ENCODE measurements at regions of chr19 and their contacts with region 1.

Region 1: DNA sequence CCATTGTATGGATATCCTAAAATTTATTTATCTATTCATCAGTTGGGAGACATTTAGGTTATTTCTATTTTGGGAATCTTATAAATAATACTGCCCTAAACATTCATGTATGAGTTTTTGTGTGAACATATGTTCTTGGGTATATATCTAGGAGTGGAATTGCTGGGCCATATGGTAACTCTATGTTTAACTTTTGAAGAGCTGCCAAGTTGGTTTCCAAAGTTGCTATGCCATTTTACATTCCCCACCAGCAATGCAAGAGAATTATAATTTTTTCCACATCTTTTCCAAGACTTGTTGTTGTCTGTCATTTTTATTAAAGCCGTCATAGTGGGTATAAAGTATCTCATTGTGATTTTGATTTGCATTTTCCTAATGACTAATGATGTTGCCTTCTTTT is 48.2 kb upstream of the CALM3 start:
- DNase-seq: no peak
- ATAC-seq: no peak
- H3K4me3 Mint-ChIP-seq: no peak overlapping the region
- H3K27ac Mint-ChIP-seq: no peak overlapping the region
- H3K4me1 Mint-ChIP-seq: no peaks in the 10 kb centered on the region
- H3K27me3 Mint-ChIP-seq: peaks cover 4% of the 10 kb centered on the region
- CTCF ChIP-seq: no peak

Region 2: DNA sequence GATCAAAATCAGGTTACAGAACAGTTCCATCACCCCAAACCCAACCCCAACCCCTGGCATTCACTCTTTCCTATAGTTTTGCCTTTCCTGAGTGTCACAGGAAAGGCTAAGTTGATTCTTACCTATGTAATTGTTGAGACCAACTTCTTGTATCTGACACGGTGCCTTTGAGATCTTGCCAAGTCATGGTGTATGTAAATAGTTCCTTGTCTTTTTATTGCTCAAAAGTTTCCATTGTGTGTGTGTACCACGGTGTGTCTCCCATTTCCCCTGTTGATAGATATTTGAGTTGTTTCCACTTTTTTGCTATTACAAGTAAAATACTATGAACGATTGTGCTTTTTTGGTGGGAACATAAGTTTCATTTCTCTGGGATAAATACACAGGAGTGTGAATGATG is 408.1 kb before region 1 on chr19:
- CTCF ChIA-PET with region 1: no interaction called
- POLR2A ChIA-PET with region 1: no interaction called
- intact Hi-C with region 1: no loop called
- DNase-seq: no peak
- ATAC-seq: no peak
- H3K4me3 Mint-ChIP-seq: no peak overlapping the region
- H3K27ac Mint-ChIP-seq: no peak overlapping the region
- H3K4me1 Mint-ChIP-seq: peaks cover 8% of the 10 kb centered on the region
- H3K27me3 Mint-ChIP-seq: peaks cover 38% of the 10 kb centered on the region
- CTCF ChIP-seq: no peak

Region 3: DNA sequence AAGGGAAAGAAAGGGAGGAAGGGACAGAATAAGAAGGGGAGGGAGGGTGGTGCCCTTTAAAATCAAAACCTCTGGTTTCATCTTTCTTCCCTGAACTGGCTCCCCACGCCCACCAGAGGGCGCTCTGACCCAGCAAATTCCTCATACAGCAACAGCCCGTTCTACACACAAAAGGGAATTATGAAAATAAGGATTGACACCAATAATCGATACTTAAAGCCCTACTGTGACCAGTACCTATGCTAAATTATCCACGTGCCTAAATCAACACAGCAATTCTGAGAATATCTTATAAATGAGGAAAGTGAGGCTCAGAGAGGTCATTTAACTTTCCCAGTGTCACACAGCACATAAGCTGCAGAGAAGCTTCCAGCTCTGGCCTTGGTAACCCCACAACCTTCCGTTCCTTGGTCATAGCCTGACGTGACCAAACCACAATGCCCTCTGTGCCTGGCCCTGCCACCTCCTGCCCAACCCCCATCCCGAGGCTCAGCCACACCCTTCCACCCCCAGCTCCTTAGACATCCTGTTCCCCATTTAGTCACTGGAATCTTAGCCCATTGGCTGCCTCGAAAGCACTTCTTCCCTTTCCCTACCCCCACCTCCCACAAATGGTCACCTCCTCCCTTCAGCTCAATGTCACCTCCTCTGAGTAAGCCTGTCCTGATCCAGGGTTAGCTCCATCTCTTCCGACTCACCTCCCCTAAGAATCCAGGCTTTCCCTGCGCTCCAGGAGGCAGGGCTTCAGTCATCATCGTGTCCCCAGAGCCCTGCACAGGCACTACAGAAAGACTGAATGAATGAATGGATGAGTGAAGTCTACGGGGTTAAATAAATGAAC is 23.0 kb before region 1 on chr19:
- CTCF ChIA-PET with region 1: interaction called, 14 read pairs
- POLR2A ChIA-PET with region 1: no interaction called
- intact Hi-C with region 1: no loop called
- DNase-seq: peak; percentile 79
- ATAC-seq: peak; percentile 68
- H3K4me3 Mint-ChIP-seq: no peak overlapping the region
- H3K27ac Mint-ChIP-seq: peak overlapping the region; percentile 51
- H3K4me1 Mint-ChIP-seq: peaks cover 12% of the 10 kb centered on the region
- H3K27me3 Mint-ChIP-seq: no peaks in the 10 kb centered on the region
- CTCF ChIP-seq: peak; percentile 99

Region 4: DNA sequence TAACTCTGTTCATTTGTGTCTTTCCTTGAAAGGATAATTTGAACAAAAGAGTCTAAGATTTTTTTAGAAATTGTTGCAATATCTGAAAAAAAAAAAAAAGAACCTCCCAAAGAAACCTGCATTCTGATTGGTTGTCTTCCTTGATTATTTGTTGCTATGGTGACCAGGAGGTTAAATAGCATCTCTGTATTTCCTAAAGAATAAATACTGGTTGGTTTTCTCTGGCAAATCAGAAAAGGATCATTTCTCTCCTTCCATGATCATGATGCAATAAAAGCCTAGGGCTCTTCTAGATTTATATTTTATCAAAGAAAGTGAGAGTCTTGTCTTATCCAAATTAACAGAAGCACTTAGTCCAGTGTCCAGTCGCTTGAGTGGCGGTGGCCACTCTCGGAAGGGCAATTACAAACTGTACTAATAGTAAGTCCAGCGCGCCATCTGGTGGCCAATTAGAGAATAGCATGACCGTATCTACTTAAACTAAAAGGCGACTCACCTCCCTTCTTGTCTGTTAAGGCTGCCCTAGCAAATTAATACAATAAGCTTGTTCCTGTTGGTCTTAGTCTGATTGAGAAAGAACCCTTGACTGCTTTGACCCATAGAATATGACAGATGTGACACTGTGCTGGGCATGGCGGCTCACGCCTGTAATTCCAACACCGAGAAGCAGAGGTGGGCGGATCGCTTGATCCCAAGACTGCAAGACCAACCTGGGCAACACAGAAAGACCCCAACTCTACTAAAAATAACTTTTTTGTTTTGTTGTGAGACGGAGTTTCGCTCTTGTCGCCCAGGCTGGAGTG is 10.3 kb before region 1 on chr19:
- CTCF ChIA-PET with region 1: interaction called, 43 read pairs
- POLR2A ChIA-PET with region 1: no interaction called
- intact Hi-C with region 1: no loop called
- DNase-seq: peak; percentile 96
- ATAC-seq: peak; percentile 72
- H3K4me3 Mint-ChIP-seq: no peak overlapping the region
- H3K27ac Mint-ChIP-seq: no peak overlapping the region
- H3K4me1 Mint-ChIP-seq: peaks cover 2% of the 10 kb centered on the region
- H3K27me3 Mint-ChIP-seq: peaks cover under 1% of the 10 kb centered on the region
- CTCF ChIP-seq: peak; percentile 91

Region 5: DNA sequence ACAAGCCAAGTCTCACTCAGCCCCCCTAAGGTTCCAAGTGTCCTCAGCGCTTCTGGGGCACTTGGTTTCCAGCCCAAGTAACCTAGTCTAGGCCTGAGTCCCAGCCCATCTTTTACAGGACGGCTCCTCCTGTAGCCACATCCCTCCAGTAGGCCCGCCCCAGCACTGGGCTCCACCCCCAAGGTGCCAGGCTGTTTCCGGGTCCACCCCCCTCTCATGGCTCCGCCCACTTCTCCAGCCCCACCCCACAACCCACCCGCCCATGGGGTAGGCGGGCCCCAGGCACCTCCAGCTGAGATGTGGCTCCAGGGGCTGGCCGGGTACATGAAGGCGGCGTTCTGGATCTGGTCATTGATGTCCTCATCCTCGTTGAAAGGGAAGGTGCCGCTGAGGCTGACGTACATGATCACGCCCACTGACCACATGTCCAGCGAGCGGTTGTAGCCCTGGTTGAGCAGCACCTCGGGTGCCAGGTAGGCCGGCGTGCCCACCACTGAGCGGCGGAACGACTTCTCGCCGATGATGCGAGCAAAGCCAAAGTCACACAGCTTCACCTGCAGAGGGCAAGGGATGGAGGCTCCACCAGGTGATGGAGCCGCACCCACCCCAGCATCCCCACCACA is 125.3 kb after region 1 on chr19:
- CTCF ChIA-PET with region 1: no interaction called
- POLR2A ChIA-PET with region 1: no interaction called
- intact Hi-C with region 1: no loop called
- DNase-seq: peak; percentile 80
- ATAC-seq: peak; percentile 97
- H3K4me3 Mint-ChIP-seq: no peak overlapping the region
- H3K27ac Mint-ChIP-seq: peak overlapping the region; percentile 56
- H3K4me1 Mint-ChIP-seq: peaks cover 6% of the 10 kb centered on the region
- H3K27me3 Mint-ChIP-seq: no peaks in the 10 kb centered on the region
- CTCF ChIP-seq: no peak

Measured in activated CD8-positive, alpha-beta T cell treated with anti-CD3 and anti-CD28 coated beads for 36 hours (primary cell).